Uterus (tissue), 4 donors: ENCODE measurements at regions of chr1 and their contacts with region 1.

Region 1: GRCh38 chr1:27300341-27301051 is 21.5 kb upstream of the TMEM222 start:
- DNase-seq: peak; percentile 86 to 92
- H3K4me3 ChIP-seq: no peak overlapping the region
- H3K27ac ChIP-seq: peak overlapping the region; percentile 84 to 89
- H3K4me1 ChIP-seq: peaks cover 4 to 12% of the 10 kb centered on the region in 2 donors
- H3K27me3 ChIP-seq: no peaks in the 10 kb centered on the region
- CTCF ChIP-seq: peak; percentile 97 to 100 (median 98)
- POLR2A ChIP-seq: no peak

Region 2: DNA sequence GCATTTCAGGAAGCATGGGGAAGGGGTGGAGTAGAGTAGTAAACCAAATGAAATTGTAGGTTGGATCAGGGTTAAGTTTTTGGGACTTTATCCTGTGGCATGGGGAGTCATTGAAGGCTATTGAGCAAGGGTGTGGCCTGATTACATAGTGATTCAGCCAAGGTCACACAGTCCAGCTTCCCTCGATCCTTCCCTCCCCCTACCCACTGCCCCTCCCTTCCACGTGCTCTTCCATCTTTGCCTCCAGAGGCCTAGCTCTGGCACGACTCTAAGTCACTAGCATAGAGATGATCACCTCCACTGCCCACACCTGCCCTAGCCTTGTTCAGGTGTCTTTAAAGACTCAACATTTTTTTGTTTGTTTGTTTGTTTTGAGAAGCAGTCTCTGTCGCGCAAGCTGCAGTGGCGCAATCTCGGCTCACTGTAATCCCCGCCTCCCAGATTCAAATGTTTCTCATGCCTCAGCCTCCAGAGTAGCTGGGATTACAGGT is 108.4 kb before region 1 on chr1:
- intact Hi-C with region 1: no loop called
- DNase-seq: no peak
- H3K4me3 ChIP-seq: no peak overlapping the region
- H3K27ac ChIP-seq: no peak overlapping the region
- H3K4me1 ChIP-seq: no peaks in the 10 kb centered on the region
- H3K27me3 ChIP-seq: no peaks in the 10 kb centered on the region
- CTCF ChIP-seq: no peak
- POLR2A ChIP-seq: no peak

Region 3: GRCh38 chr1:27257155-27257554 is 43.3 kb before region 1 on chr1:
- intact Hi-C with region 1: no loop called
- DNase-seq: no peak
- H3K4me3 ChIP-seq: no peak overlapping the region
- H3K27ac ChIP-seq: no peak overlapping the region
- H3K4me1 ChIP-seq: no peaks in the 10 kb centered on the region
- H3K27me3 ChIP-seq: no peaks in the 10 kb centered on the region
- CTCF ChIP-seq: no peak
- POLR2A ChIP-seq: no peak

Region 4: DNA sequence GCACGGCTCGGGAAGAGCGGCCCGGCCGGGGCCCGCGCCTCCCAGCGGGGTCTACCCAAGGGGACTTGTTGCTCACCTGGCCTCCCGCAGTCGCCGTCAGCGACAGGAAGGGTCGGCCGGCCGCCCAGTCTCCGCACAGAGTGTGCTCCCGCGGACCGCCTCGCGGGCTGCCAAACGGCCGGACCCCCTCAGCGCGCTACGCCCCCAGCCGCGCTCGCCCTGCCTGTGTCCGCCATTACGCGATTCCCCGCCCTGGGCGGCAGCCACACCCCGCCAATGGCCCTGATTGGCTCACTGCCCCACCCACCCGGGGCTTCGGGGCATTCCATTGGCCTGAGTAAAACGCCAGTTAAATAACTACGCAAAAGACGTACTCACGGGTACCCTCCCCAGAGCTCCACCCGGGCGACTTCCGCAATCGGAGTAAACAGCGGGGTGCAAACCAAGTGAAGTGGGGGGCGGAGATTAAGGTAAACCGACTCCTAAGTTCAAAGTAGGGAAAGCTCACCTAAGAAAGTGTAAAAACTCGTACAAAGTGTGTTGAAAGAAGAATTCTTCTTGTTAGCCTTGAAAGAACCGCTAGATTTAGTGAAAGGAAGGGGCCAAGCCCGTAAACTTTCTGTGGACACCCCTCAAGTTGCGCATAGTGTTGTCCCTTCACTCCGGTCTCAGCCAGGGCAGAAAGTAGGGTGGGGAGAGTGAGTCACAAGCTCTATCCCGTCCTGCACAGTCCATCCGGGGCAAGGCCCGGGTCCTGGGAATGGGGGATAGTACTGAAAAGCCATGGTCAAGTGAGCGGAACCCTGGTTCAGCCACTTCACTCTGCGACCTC is 189.6 kb after region 1 on chr1 and contains the start of gene WASF2:
- intact Hi-C with region 1: no loop called
- DNase-seq: peak; percentile 97
- H3K4me3 ChIP-seq: peak within 1 kb of the TSS; percentile 76 to 93
- H3K27ac ChIP-seq: peak within 1 kb of the TSS; percentile 97 to 98
- H3K4me1 ChIP-seq: peaks cover 9 to 16% of the 10 kb centered on the region in 2 donors
- H3K27me3 ChIP-seq: no peaks in the 10 kb centered on the region
- CTCF ChIP-seq: peak in 2 of 4 experiments; percentile 9 to 19
- POLR2A ChIP-seq: peak; percentile 97
- total RNA-seq, gene WASF2: 27.2 to 178 (median 41.1) TPM

Region 5: DNA sequence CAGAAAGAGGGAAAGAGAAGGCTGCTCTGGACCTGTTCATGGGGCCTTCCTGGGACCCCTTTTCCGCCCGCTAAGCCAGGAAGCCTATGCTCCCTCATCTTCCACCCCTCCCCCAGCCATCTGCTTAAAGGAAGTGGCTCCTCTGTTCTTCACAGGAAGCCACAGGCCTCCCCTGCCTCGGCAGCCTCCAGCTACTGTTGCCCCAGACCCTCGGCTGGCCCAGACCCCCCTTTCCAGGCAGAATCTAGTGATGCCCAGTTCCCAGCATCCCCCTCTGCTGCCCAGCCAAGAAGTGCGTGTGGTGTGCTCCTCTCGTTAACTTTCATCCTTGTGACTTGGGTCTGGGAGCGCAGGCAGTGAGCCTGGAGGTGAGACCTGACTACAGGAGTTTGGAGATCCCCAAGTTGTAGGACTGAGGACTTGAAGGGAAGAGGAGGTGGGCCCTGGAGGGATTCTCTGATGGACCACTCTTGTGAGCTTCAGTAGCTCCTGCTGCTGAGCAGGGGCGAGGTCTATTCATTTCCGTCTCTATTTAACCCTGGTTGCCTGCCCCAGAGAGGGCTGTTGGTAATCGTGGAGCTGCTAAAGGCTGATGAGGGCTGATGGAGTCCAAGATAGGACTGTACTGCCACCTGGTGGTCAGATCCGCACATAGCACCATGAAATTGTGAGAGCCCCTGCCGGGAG is 362.4 kb after region 1 on chr1:
- intact Hi-C with region 1: loop called (anchors 10 kb)
- DNase-seq: peak; percentile 85 to 86
- H3K4me3 ChIP-seq: no peak overlapping the region
- H3K27ac ChIP-seq: peak overlapping the region in 1 of 2 donors; percentile 75
- H3K4me1 ChIP-seq: peaks cover 0 to 3% of the 10 kb centered on the region in 2 donors
- H3K27me3 ChIP-seq: no peaks in the 10 kb centered on the region
- CTCF ChIP-seq: peak; percentile 89 to 98 (median 92)
- POLR2A ChIP-seq: no peak